Brain microvascular endothelial cell (primary cell): ENCODE measurements at regions of chr4 and their contacts with region 1.

Region 1: GRCh38 chr4:38160487-38161207 is 200.4 kb downstream of the PTTG2 start:
- DNase-seq: peak; percentile 98
- H3K4me3 ChIP-seq: no peak overlapping the region
- H3K27ac ChIP-seq: peak overlapping the region; percentile 99
- H3K27me3 ChIP-seq: no peaks in the 10 kb centered on the region
- CTCF ChIP-seq: no peak

Region 2: GRCh38 chr4:37836838-37837440 is 323.7 kb before region 1 on chr4:
- in situ Hi-C with region 1: no loop called
- DNase-seq: no peak
- H3K4me3 ChIP-seq: no peak overlapping the region
- H3K27ac ChIP-seq: peak overlapping the region; percentile 51
- H3K27me3 ChIP-seq: no peaks in the 10 kb centered on the region
- CTCF ChIP-seq: no peak

Region 3: GRCh38 chr4:38062088-38062893 is 98.4 kb before region 1 on chr4:
- in situ Hi-C with region 1: loop called (anchors 25 kb)
- DNase-seq: peak; percentile 76
- H3K4me3 ChIP-seq: peak overlapping the region; percentile 37
- H3K27ac ChIP-seq: peak overlapping the region; percentile 56
- H3K27me3 ChIP-seq: no peaks in the 10 kb centered on the region
- CTCF ChIP-seq: peak; percentile 84